ENCODE measurements at regions of chr4 and their contacts with region 1.

Region 1: DNA sequence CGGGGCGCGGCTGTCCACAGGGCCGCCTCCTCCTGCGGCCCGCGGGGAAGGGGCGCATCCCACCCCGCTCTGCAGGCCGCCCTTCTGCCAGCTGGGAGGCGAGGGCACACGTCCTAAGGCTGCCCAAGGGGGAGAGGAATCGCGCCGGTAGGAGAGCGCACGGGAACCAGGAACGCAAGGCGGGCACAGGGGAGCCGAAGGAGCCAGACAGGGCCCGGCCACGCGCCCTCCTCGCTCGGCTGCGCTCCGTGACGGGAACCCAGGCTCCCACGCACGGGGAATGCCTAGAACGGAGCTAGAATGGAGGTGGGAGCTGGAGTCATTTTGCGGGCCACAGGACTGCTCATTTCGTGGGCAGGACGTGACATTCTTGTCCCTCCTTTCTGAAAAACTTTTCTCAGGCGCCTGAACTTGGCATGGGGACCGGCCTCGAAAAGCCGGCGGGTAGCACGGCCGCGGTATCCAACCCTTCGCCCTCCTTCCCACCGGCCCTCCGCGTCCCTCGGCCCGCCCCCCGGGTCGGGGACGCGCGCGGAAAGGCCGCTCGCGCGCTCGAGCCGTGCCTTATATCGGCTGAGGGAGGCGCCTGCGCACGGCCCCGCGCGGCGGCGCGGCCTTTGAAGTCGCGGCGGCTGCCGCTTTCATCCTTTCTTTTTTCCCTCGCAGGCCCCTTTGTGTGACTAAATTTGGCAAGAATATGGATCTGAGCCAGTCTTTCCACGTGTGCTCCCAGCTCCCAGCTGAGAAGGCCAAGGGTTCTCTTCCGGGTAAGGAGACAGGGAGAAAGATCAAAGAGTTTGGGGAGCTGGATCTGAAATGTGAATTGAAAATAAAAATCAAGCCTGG is 4.2 kb upstream of the LEF1 start:
- DNase-seq: no peak
- ATAC-seq: peak; percentile 27 to 30
- H3K4me3 ChIP-seq: peak overlapping the region; percentile 56 to 78 (median 60)
- H3K27ac ChIP-seq: no peak overlapping the region
- H3K4me1 ChIP-seq: peaks cover 11 to 14% of the 10 kb centered on the region in 2 donors
- H3K27me3 ChIP-seq: peaks cover 68 to 76% (median 73%) of the 10 kb centered on the region in 3 donors
- CTCF ChIP-seq: no peak
- POLR2A ChIP-seq: no peak

Region 2: GRCh38 chr4:108029731-108030130 is 143.2 kb before region 1 on chr4:
- in situ Hi-C with region 1: no loop called
- intact Hi-C with region 1: loop called (anchors 10 kb)
- DNase-seq: no peak
- ATAC-seq: no peak
- H3K4me3 ChIP-seq: no peak overlapping the region
- H3K27ac ChIP-seq: no peak overlapping the region
- H3K4me1 ChIP-seq: peaks cover 0 to 6% of the 10 kb centered on the region in 2 donors
- H3K27me3 ChIP-seq: no peaks in the 10 kb centered on the region
- CTCF ChIP-seq: no peak
- POLR2A ChIP-seq: no peak

Region 3: GRCh38 chr4:108224611-108225053 is 51.7 kb after region 1 on chr4:
- in situ Hi-C with region 1: no loop called
- intact Hi-C with region 1: no loop called
- DNase-seq: no peak
- ATAC-seq: no peak
- H3K4me3 ChIP-seq: no peak overlapping the region
- H3K27ac ChIP-seq: no peak overlapping the region
- H3K4me1 ChIP-seq: no peaks in the 10 kb centered on the region
- H3K27me3 ChIP-seq: no peaks in the 10 kb centered on the region
- CTCF ChIP-seq: no peak
- POLR2A ChIP-seq: no peak

Region 4: DNA sequence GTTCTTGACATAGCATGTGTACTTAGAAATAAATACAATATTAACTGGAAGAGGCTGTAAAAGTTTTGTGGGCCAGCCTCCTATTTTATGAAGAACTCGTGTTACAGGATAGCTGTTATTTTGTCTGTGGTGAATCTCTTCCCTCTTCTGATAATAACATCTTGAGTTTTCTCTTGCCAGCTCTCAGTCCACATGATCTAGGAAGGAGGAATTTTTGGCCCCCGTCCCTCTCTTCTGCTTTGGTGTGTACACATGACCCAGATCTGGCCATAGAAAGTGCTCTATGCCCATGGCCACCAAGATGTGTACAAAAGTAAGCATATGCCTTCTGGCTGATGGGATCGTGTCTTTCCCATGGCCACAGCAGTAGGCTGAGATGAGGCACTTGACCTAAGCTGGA is 103.7 kb after region 1 on chr4:
- in situ Hi-C with region 1: no loop called
- intact Hi-C with region 1: no loop called
- DNase-seq: no peak
- ATAC-seq: no peak
- H3K4me3 ChIP-seq: no peak overlapping the region
- H3K27ac ChIP-seq: no peak overlapping the region
- H3K4me1 ChIP-seq: no peaks in the 10 kb centered on the region
- H3K27me3 ChIP-seq: no peaks in the 10 kb centered on the region
- CTCF ChIP-seq: no peak
- POLR2A ChIP-seq: no peak

Region 5: GRCh38 chr4:108398316-108398715 is 225.3 kb after region 1 on chr4:
- in situ Hi-C with region 1: no loop called
- intact Hi-C with region 1: no loop called
- DNase-seq: no peak
- ATAC-seq: no peak
- H3K4me3 ChIP-seq: no peak overlapping the region
- H3K27ac ChIP-seq: no peak overlapping the region
- H3K4me1 ChIP-seq: no peaks in the 10 kb centered on the region
- H3K27me3 ChIP-seq: no peaks in the 10 kb centered on the region
- CTCF ChIP-seq: no peak
- POLR2A ChIP-seq: no peak

Measured in gastrocnemius medialis (tissue), 4 donors.